Sigmoid colon (tissue), 7 donors: ENCODE measurements at regions of chr21 and their contacts with region 1.

Region 1: GRCh38 chr21:45554477-45555175 is 12.4 kb upstream of the SLC19A1 start:
- DNase-seq: peak; percentile 91
- H3K4me3 ChIP-seq: peak overlapping the region; percentile 47 to 62 (median 58)
- H3K27ac ChIP-seq: peak overlapping the region; percentile 70 to 79 (median 78)
- H3K4me1 ChIP-seq: peaks cover 0 to 12% (median 11%) of the 10 kb centered on the region in 4 donors
- H3K27me3 ChIP-seq: no peaks in the 10 kb centered on the region
- CTCF ChIP-seq: peak; percentile 64 to 86 (median 78)
- EP300 ChIP-seq: no peak
- POLR2A ChIP-seq: no peak

Region 2: DNA sequence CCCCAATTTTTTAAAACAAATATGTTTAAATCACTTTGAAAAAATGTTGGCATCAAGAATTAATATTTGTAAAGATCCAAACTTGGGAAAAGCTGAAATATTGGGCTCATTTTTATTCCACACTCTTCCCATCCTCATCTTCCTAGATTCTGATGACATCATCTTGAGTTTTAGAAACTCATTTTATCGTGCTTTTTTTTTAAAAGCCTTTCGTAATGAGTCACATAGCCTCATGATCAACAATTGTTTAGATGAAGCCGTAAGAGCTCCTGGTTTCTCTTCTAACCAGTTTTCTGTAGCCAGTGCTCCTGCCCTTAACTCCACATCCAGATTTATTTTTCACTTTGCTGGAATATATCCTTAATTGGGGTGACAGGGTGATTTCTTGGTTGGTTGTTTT is 345.6 kb before region 1 on chr21:
- intact Hi-C with region 1: no loop called
- DNase-seq: no peak
- H3K4me3 ChIP-seq: no peak overlapping the region
- H3K27ac ChIP-seq: no peak overlapping the region
- H3K4me1 ChIP-seq: no peaks in the 10 kb centered on the region
- H3K27me3 ChIP-seq: no peaks in the 10 kb centered on the region
- CTCF ChIP-seq: no peak
- EP300 ChIP-seq: no peak
- POLR2A ChIP-seq: no peak

Region 3: GRCh38 chr21:45580576-45581321 is 26.1 kb after region 1 on chr21:
- intact Hi-C with region 1: no loop called
- DNase-seq: peak; percentile 41
- H3K4me3 ChIP-seq: no peak overlapping the region
- H3K27ac ChIP-seq: no peak overlapping the region
- H3K4me1 ChIP-seq: no peaks in the 10 kb centered on the region
- H3K27me3 ChIP-seq: no peaks in the 10 kb centered on the region
- CTCF ChIP-seq: no peak
- EP300 ChIP-seq: no peak
- POLR2A ChIP-seq: no peak

Region 4: GRCh38 chr21:45596704-45597318 is 42.2 kb after region 1 on chr21:
- intact Hi-C with region 1: loop called (anchors 1 kb)
- DNase-seq: peak; percentile 85
- H3K4me3 ChIP-seq: no peak overlapping the region
- H3K27ac ChIP-seq: no peak overlapping the region
- H3K4me1 ChIP-seq: peaks cover 0 to 5% (median 0%) of the 10 kb centered on the region in 4 donors
- H3K27me3 ChIP-seq: no peaks in the 10 kb centered on the region
- CTCF ChIP-seq: peak; percentile 86 to 93 (median 90)
- EP300 ChIP-seq: no peak
- POLR2A ChIP-seq: no peak

Region 5: GRCh38 chr21:45643021-45643980 is 88.7 kb after region 1 on chr21 and contains the start of gene PCBP3:
- intact Hi-C with region 1: loop called (anchors 5 kb)
- DNase-seq: peak; percentile 99
- H3K4me3 ChIP-seq: peak within 1 kb of the TSS; percentile 29 to 63 (median 54)
- H3K27ac ChIP-seq: peak within 1 kb of the TSS; percentile 57 to 86 (median 70)
- H3K4me1 ChIP-seq: peaks cover 0 to 24% (median 15%) of the 10 kb centered on the region in 4 donors
- H3K27me3 ChIP-seq: peaks cover 0 to 25% (median 0%) of the 10 kb centered on the region in 3 donors
- CTCF ChIP-seq: no peak
- EP300 ChIP-seq: no peak
- POLR2A ChIP-seq: no peak
- total RNA-seq, gene PCBP3: 5.5 to 21.3 (median 8.4) TPM

Region 6: DNA sequence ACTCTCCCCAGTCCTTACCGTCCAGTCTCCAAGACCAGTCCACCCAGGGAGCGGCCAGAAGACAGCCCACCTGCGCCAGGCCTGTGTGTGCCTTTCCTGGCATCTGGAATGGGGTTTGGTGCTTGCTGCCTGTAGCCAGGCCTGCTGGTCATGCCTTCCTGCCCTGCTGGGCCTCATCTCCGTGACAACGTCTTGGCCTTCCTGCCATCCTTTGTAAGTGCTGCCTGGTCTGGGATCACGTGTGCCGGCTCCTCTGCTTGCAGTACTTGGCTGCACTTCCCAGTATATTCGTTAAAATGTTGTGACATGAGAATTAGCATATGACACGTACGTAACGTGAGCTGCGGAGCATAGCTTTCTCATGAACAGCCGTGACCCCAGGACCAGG is 281.6 kb after region 1 on chr21:
- intact Hi-C with region 1: no loop called
- DNase-seq: no peak
- H3K4me3 ChIP-seq: no peak overlapping the region
- H3K27ac ChIP-seq: peak overlapping the region in 1 of 4 donors; percentile 69
- H3K4me1 ChIP-seq: peaks cover 0 to 37% (median 8%) of the 10 kb centered on the region in 4 donors
- H3K27me3 ChIP-seq: no peaks in the 10 kb centered on the region
- CTCF ChIP-seq: no peak
- EP300 ChIP-seq: no peak
- POLR2A ChIP-seq: no peak

Region 7: GRCh38 chr21:45923146-45923545 is 368.5 kb after region 1 on chr21:
- intact Hi-C with region 1: loop called (anchors 5 kb)
- DNase-seq: peak; percentile 89
- H3K4me3 ChIP-seq: no peak overlapping the region
- H3K27ac ChIP-seq: no peak overlapping the region
- H3K4me1 ChIP-seq: peaks cover 0 to 7% (median 0%) of the 10 kb centered on the region in 4 donors
- H3K27me3 ChIP-seq: no peaks in the 10 kb centered on the region
- CTCF ChIP-seq: peak; percentile 68 to 95 (median 84)
- EP300 ChIP-seq: no peak
- POLR2A ChIP-seq: no peak